Prostate gland (tissue), 2 donors: ENCODE measurements at regions of chr22 and their contacts with region 1.

Region 1: DNA sequence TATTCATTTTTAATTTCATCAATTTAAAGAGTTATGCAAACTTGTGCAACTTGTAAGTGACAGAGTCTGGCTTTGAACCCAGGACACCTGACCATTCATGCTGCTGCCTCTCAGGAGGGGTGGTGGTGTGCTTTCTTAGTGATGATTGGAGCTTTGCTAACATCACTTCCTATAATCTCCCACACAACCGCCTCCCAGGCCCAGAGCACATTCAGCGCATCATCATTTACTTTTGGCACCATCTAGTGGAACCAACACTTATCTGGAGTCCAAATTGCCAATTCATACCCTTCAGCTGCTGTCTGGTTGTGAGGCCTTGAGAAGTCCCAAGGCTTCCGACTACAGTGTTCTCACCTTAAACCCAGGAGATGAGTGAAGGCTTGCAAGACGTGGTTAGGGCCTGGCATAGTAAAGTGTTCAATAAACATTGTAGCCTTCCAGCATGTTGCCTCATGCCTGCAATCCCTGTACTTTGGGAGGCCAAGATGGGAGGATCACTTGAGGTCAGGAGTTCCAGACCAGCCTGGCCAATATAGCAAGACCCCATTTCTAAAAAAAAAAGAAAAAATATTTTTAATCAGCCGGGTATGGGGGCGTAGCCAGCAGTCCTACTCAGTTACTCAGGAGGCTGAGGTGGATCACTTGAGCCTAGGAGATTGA is 1.1 kb upstream of the TTLL1 start:
- DNase-seq: peak; percentile 58
- H3K4me3 ChIP-seq: no peak overlapping the region
- H3K27ac ChIP-seq: no peak overlapping the region
- H3K4me1 ChIP-seq: peaks cover 4% of the 10 kb centered on the region
- H3K27me3 ChIP-seq: no peaks in the 10 kb centered on the region
- CTCF ChIP-seq: peak in 3 of 4 experiments; percentile 19 to 58 (median 38)
- POLR2A ChIP-seq: no peak

Region 2: GRCh38 chr22:42769574-42770447 is 320.4 kb before region 1 on chr22:
- intact Hi-C with region 1: loop called (anchors 10 kb)
- DNase-seq: peak; percentile 61
- H3K4me3 ChIP-seq: no peak overlapping the region
- H3K27ac ChIP-seq: peak overlapping the region in 1 of 2 donors; percentile 25
- H3K4me1 ChIP-seq: no peaks in the 10 kb centered on the region
- H3K27me3 ChIP-seq: no peaks in the 10 kb centered on the region
- CTCF ChIP-seq: no peak
- POLR2A ChIP-seq: no peak

Region 3: DNA sequence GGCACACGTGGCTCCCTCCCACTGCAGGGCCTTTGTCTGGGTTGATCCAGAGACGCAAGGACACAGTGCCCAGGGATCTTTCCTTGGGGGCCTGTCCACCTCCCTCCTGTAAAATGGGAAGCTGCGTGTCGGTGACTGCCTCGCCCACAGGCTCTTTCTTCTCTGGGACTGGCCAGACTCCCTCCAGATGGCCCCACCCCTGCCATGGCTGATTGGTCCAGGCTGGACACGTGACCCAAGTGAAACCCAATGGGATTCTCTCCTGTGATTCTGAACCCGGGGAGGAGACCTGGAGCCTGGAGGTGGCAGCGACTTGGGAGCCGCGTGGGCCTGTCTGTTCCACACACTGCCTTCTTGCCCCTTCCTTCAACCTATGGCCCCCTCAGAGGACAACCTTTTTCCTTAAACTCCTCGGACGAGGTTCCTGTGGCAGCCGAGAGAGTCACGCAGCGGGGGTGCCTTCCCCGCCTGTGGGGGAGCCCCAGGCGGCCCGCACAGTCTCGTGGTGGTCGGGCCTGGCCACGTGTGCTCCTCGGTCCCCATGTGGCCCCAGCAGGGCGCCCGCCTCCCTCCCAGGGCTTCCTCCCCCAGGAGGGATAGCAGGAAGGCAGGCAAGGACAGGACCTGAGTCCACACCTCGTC is 309.2 kb after region 1 on chr22:
- intact Hi-C with region 1: no loop called
- DNase-seq: no peak
- H3K4me3 ChIP-seq: no peak overlapping the region
- H3K27ac ChIP-seq: no peak overlapping the region
- H3K4me1 ChIP-seq: no peaks in the 10 kb centered on the region
- H3K27me3 ChIP-seq: no peaks in the 10 kb centered on the region
- CTCF ChIP-seq: no peak
- POLR2A ChIP-seq: no peak